ENCODE measurements at regions of chrX and their contacts with region 1.

Region 1: GRCh38 chrX:151621422-151621821 is 57.9 kb downstream of the PASD1 start:
- DNase-seq: no peak
- H3K4me3 ChIP-seq: no peak overlapping the region
- H3K27ac ChIP-seq: no peak overlapping the region
- H3K4me1 ChIP-seq: no peaks in the 10 kb centered on the region
- H3K27me3 ChIP-seq: no peaks in the 10 kb centered on the region
- CTCF ChIP-seq: no peak

Region 2: GRCh38 chrX:151790481-151791160 is 169.2 kb after region 1 on chrX:
- intact Hi-C with region 1: loop called (anchors 10 kb)
- DNase-seq: no peak
- H3K4me3 ChIP-seq: no peak overlapping the region
- H3K27ac ChIP-seq: no peak overlapping the region
- H3K4me1 ChIP-seq: no peaks in the 10 kb centered on the region
- H3K27me3 ChIP-seq: no peaks in the 10 kb centered on the region
- CTCF ChIP-seq: no peak